Common myeloid progenitor, CD34-positive (primary cell): ENCODE measurements at regions of chr6 and their contacts with region 1.

Region 1: GRCh38 chr6:41182069-41183034 is 18.6 kb downstream of the TREML2 start:
- DNase-seq: peak; percentile 75 to 91 (median 90)
- H3K4me3 ChIP-seq: no peak overlapping the region
- H3K27ac ChIP-seq: no peak overlapping the region
- H3K4me1 ChIP-seq: peaks cover 4 to 26% (median 9%) of the 10 kb centered on the region in 4 experiments
- H3K27me3 ChIP-seq: no peaks in the 10 kb centered on the region

Region 2: DNA sequence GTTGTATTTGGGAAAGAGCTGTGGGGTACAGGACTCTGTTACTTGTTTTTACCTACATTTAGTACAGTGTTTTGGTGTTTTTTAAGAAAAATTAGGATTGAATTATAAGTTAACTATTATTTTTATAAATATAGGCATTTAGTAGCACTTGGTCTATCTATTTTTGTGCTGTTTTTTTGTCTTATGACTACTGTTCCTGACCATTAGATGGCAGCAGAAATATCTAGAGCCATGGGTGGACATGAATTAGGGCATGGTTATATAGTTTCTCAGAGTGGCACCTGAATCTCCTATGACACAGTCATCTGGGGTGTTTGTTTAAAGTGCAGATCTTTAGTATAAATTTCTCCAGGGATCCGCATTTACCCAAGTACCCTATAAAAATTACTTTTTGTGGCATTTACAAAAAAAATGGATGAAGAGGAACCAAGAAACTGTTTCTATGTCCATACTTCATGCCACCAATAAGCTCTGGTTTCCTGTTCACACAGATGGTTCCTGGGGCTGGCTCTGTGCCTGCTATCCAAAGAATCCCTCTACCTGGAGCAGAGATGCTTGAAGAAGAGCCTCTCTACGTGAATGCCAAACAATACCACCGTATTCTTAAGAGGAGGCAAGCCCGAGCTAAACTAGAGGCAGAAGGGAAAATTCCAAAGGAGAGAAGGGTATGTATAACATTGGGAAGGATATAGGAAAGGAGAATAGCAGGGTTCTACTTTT is 89.8 kb before region 1 on chr6:
- CTCF ChIA-PET with region 1: interaction called, 28 read pairs
- POLR2A ChIA-PET with region 1: no interaction called
- DNase-seq: peak; percentile 34 to 65 (median 59)
- H3K4me3 ChIP-seq: no peak overlapping the region
- H3K27ac ChIP-seq: no peak overlapping the region
- H3K4me1 ChIP-seq: no peaks in the 10 kb centered on the region
- H3K27me3 ChIP-seq: no peaks in the 10 kb centered on the region

Region 3: GRCh38 chr6:41167173-41167963 is 15.0 kb before region 1 on chr6:
- CTCF ChIA-PET with region 1: interaction called, 40 read pairs
- POLR2A ChIA-PET with region 1: no interaction called
- DNase-seq: peak in 2 of 3 donors; percentile 16 to 29
- H3K4me3 ChIP-seq: no peak overlapping the region
- H3K27ac ChIP-seq: no peak overlapping the region
- H3K4me1 ChIP-seq: peaks cover 0 to 3% (median 1%) of the 10 kb centered on the region in 4 experiments
- H3K27me3 ChIP-seq: peaks cover 0 to 2% (median 0%) of the 10 kb centered on the region in 5 experiments